HepG2 (cell line): ENCODE measurements at regions of chr12 and their contacts with region 1.

Region 1: DNA sequence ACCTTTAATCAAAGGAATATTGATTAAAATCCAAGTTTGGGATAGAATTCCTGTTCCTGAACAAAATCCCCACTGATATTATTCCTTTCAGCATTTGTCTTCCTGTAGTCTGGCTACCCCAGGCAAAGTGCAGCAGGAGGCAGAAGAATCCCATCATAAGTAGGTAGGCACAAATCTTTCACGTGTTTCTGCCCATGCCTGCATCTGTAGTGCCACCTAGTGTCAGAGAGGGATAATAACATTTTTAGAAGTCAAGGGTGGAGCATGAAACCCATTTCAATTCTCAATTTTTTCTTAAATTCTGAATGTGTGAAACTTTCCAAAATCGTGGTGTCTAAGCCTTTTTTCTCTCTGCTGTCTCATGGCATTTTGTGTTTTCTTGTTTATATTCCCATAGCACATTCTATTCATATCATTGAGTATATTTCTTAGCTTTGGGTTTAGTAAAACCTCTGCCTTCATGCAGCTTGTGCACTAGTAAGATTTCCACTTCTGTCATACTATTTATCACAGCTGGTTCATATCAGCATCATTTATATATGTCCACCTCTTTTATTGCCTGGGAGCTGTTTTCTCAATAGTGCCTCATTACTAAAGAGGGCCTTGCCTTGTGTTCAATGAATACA is 47.8 kb upstream of the RERG start:
- DNase-seq: peak; percentile 64
- ATAC-seq: peak; percentile 76
- H3K4me3 ChIP-seq: no peak overlapping the region
- H3K27ac ChIP-seq: no peak overlapping the region
- H3K4me1 ChIP-seq: no peaks in the 10 kb centered on the region
- H3K27me3 ChIP-seq: no peaks in the 10 kb centered on the region; a peak in 1 of 5 replicates
- CTCF ChIP-seq: peak; percentile 82
- EP300 ChIP-seq: no peak
- POLR2A ChIP-seq: no peak
- RAD21 ChIP-seq: peak; percentile 42; the same call in 1 of the 2 replicates

Region 2: DNA sequence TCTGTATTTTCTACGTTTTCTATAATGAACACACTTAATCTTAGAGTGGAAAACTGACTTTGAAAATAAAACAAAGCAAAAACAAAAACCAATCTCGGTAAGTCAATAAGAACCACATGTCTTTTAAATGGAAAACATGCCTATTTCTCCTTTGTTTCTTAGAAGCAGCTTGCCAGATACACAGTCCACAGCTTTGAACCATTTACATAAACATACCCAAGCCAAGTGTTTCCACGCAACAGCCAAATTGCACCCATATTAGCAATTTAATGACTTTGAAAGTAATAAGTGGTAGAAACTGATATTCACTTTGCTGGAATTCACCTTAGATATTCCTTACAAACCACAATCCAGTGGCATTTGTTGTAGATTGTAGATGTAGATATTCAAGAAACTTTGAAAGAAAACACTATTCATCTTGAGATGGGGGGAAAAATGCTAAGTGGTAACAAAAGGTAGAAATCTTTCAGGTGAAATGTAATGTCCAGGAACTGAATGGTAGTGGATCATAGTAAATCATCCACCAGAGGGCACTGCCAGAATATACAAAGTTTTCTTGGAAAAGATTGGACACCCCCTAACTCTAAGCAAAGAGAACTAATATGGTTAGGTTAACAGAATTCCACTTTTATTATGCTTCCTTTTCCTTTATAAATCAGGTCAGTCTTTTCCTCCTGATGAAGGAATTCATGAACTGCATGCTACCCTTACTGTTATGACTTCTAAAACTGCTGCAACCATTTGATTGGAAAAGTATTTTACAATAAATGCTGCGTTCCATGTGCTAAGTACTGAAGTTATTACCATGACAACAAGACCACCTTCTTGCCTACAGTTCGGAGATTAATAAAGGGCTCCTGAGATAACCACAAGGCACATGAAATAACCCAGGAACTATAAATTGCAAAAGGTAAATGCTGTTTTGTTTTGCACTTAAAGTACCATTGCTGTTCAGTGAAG is 117.6 kb before region 1 on chr12:
- CTCF ChIA-PET with region 1: interaction called, 4 read pairs
- POLR2A ChIA-PET with region 1: no interaction called
- in situ Hi-C with region 1: no loop called
- intact Hi-C with region 1: loop called (anchors 2 kb)
- DNase-seq: peak; percentile 5
- ATAC-seq: peak; percentile 53; the same call in 2 of the 3 replicates
- H3K4me3 ChIP-seq: no peak overlapping the region
- H3K27ac ChIP-seq: no peak overlapping the region
- H3K4me1 ChIP-seq: no peaks in the 10 kb centered on the region
- H3K27me3 ChIP-seq: 0 out of 5 replicates have a peak, but pooled peaks cover 0 to 3% of the 10 kb centered on the region in 2 experiments
- CTCF ChIP-seq: peak; percentile 43
- EP300 ChIP-seq: no peak
- POLR2A ChIP-seq: no peak
- RAD21 ChIP-seq: no peak

Region 3: GRCh38 chr12:15227004-15227679 is 41.9 kb before region 1 on chr12:
- CTCF ChIA-PET with region 1: interaction called, 11 read pairs
- POLR2A ChIA-PET with region 1: no interaction called
- in situ Hi-C with region 1: no loop called
- intact Hi-C with region 1: loop called (anchors 1 kb)
- DNase-seq: peak; percentile 42
- ATAC-seq: peak; percentile 88
- H3K4me3 ChIP-seq: no peak overlapping the region
- H3K27ac ChIP-seq: no peak overlapping the region
- H3K4me1 ChIP-seq: no peaks in the 10 kb centered on the region
- H3K27me3 ChIP-seq: peaks cover 0 to under 1% of the 10 kb centered on the region in 2 experiments; a peak in 2 of 5 replicates
- CTCF ChIP-seq: peak; percentile 46
- EP300 ChIP-seq: no peak
- POLR2A ChIP-seq: no peak
- RAD21 ChIP-seq: no peak

Region 4: GRCh38 chr12:15289192-15289591 is 20.2 kb after region 1 on chr12:
- CTCF ChIA-PET with region 1: no interaction called
- POLR2A ChIA-PET with region 1: no interaction called
- in situ Hi-C with region 1: no loop called
- intact Hi-C with region 1: no loop called
- DNase-seq: no peak
- ATAC-seq: no peak
- H3K4me3 ChIP-seq: no peak overlapping the region
- H3K27ac ChIP-seq: no peak overlapping the region
- H3K4me1 ChIP-seq: no peaks in the 10 kb centered on the region
- H3K27me3 ChIP-seq: no peaks in the 10 kb centered on the region
- CTCF ChIP-seq: no peak
- EP300 ChIP-seq: no peak
- POLR2A ChIP-seq: no peak
- RAD21 ChIP-seq: no peak

Region 5: DNA sequence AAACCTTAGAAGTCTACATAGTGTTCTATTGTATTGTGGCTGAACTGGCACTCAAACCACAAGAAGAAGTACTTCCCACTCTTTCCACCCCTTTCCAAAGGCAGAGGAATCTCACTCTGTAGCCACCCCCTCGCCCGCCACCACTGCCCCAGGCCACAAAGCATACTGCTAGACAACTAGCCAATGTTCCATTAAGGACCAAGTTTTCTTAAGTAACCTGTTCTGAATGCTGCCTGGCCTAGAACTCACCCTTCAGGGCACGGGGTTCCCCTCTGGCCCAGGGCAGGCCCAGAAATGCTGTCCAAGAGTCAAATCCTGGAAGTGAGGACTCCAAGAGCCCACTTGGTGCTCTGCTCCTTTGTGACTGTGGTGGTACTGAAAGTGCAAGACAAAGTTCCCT is 37.6 kb after region 1 on chr12:
- CTCF ChIA-PET with region 1: no interaction called
- POLR2A ChIA-PET with region 1: no interaction called
- in situ Hi-C with region 1: no loop called
- intact Hi-C with region 1: no loop called
- DNase-seq: no peak
- ATAC-seq: no peak
- H3K4me3 ChIP-seq: no peak overlapping the region
- H3K27ac ChIP-seq: no peak overlapping the region
- H3K4me1 ChIP-seq: no peaks in the 10 kb centered on the region
- H3K27me3 ChIP-seq: no peaks in the 10 kb centered on the region; a peak in 1 of 5 replicates
- CTCF ChIP-seq: no peak
- EP300 ChIP-seq: no peak
- POLR2A ChIP-seq: no peak
- RAD21 ChIP-seq: no peak